ENCODE measurements at regions of chr15 and their contacts with region 1.

Region 1: DNA sequence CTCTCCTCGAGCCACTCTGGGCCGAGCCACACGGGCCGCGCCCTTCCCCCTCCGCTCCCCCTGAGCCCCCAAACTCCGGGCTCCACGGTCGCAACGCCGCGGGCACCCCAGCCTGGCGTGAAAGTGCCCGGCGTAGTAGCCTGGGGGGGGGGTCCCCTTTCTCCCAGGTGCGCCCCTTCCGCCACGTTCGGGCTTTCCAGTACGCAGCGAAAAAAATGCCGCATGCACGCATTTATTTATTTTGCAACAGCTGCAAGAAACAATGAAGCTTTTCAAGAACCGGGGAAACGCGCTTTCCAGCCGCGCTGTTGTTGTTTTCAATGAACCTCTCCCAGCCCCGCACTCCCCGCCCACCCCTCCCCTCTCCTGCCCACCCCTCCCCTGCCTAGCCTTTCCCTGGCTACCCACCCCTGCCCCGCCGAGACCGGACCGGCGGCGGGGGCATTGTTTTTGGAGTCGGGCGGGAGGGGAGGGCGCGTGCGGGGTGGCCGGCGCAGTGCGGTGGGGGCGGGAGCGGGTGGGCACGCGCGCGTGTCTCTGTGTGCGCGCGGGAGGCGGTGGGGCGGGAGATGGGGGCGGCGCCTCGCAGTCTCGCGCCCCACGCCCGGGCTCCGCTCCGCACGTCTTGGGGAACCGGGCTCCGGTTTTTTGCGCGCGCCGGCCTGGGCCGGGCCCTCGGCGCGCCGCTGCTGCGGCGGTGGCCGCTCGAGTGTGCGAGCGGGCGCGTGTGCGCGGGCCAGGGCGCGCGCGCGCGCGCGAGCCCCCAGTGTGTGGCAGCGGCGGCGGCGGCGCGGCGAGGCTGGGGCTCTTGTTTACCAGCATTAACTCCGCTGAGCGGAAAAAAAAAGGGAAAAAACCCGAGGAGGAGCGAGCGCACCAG is at the start of gene IGF1R:
- DNase-seq: peak; percentile 88 to 94 (median 91)
- ATAC-seq: peak; percentile 46 to 89 (median 76)
- H3K4me3 ChIP-seq: peak within 1 kb of the TSS; percentile 68 to 93 (median 86)
- H3K27ac ChIP-seq: peak within 1 kb of the TSS; percentile 90 to 97 (median 94)
- H3K4me1 ChIP-seq: peaks cover 0 to 36% (median 19%) of the 10 kb centered on the region in 12 donors
- H3K27me3 ChIP-seq: peaks cover 0 to 68% (median 17%) of the 10 kb centered on the region in 9 donors
- CTCF ChIP-seq: peak in 5 of 12 donors; percentile 2 to 44 (median 19)
- POLR2A ChIP-seq: peak; percentile 35 to 54
- total RNA-seq, gene IGF1R: 26.0 to 93.1 (median 47.5) TPM

Region 2: GRCh38 chr15:98518823-98519561 is 129.0 kb before region 1 on chr15:
- intact Hi-C with region 1: loop called in 5 of 10 experiments (anchors 2 to 10 kb)
- DNase-seq: peak in 3 of 5 donors; percentile 41 to 54 (median 50)
- ATAC-seq: peak in 3 of 4 donors; percentile 73 to 82 (median 82)
- H3K4me3 ChIP-seq: no peak overlapping the region
- H3K27ac ChIP-seq: no peak overlapping the region
- H3K4me1 ChIP-seq: peaks cover 0 to 8% (median under 1%) of the 10 kb centered on the region in 12 donors
- H3K27me3 ChIP-seq: peaks cover 0 to 8% (median 0%) of the 10 kb centered on the region in 9 donors
- CTCF ChIP-seq: peak; percentile 62 to 89 (median 82)
- POLR2A ChIP-seq: no peak

Region 3: DNA sequence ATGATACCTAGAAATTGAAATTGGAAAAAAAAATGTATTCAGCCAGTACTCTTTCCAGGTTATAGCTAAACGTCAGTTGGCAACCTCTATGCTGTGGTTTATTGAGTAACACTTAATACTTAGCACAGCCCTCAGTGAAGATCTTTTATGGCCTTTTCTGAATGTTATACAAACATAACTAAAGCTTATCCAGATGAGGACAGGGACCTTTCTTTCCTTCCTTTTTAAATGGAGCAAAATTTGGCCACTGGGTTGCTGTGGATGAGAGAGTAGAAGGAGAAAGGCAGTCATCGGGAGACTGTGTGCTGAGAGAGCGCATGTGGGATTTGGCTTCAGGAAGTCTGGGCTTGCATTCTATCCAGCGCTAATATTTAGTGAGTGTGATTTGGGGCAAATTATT is 36.4 kb after region 1 on chr15:
- intact Hi-C with region 1: no loop called
- DNase-seq: no peak
- ATAC-seq: peak in 3 of 4 donors; percentile 14 to 49 (median 44)
- H3K4me3 ChIP-seq: no peak overlapping the region
- H3K27ac ChIP-seq: peak overlapping the region in 6 of 12 donors; percentile 24 to 73 (median 55)
- H3K4me1 ChIP-seq: peaks cover 7 to 80% (median 46%) of the 10 kb centered on the region in 12 donors
- H3K27me3 ChIP-seq: no peaks in the 10 kb centered on the region
- CTCF ChIP-seq: no peak
- POLR2A ChIP-seq: no peak

Region 4: GRCh38 chr15:98719137-98719740 is 71.2 kb after region 1 on chr15:
- intact Hi-C with region 1: loop called in 2 of 10 experiments (anchors 2 to 5 kb)
- DNase-seq: no peak
- ATAC-seq: no peak
- H3K4me3 ChIP-seq: no peak overlapping the region
- H3K27ac ChIP-seq: peak overlapping the region in 10 of 12 donors; percentile 61 to 81 (median 69)
- H3K4me1 ChIP-seq: peaks cover 0 to 99% (median 57%) of the 10 kb centered on the region in 12 donors
- H3K27me3 ChIP-seq: no peaks in the 10 kb centered on the region
- CTCF ChIP-seq: no peak
- POLR2A ChIP-seq: no peak

Region 5: DNA sequence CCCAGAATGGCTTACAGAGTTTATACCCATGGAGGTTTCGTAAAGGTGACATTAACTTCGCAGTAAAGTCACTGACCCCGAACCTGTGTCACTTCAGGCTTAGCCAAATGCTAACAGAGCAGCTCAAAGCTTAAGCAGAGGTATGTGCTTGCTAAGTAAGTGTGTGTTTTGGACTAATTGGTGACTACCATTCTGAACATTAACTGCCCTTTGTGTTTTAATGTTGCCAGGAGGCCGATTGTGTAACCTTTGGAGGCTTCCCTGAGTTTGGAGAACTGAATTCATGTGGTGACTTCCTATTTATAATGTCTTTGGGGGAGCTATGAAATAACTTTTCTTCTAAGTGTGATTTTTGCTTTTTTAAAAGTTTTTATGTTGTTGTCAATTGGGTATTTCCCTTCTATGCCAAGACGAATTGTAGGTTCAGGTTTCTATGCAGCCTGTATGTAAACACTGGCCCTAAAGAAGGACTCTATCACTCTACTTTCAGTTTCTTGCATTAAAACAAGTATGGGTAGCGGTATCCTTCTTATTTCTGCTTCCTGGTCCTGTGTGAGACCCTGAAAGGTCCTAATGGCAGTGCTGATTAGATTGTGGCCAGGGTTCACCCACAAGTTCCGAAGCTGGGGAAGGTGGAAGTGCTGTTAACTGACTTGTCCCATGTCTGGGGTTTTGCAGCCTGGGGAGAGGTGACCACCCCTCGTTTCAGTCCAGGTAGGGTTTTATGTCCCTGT is 86.6 kb after region 1 on chr15:
- intact Hi-C with region 1: loop called in 4 of 10 experiments (anchors 5 to 10 kb)
- DNase-seq: no peak
- ATAC-seq: peak in 1 of 4 donors; percentile 12
- H3K4me3 ChIP-seq: no peak overlapping the region
- H3K27ac ChIP-seq: peak overlapping the region in 9 of 12 donors; percentile 6 to 73 (median 38)
- H3K4me1 ChIP-seq: peaks cover 0 to 93% (median 54%) of the 10 kb centered on the region in 12 donors
- H3K27me3 ChIP-seq: no peaks in the 10 kb centered on the region
- CTCF ChIP-seq: no peak
- POLR2A ChIP-seq: no peak

Region 6: GRCh38 chr15:98850961-98851573 is 203.1 kb after region 1 on chr15:
- intact Hi-C with region 1: loop called in 4 of 10 experiments (anchors 1 kb)
- DNase-seq: peak; percentile 73 to 83 (median 83)
- ATAC-seq: peak; percentile 60 to 82 (median 71)
- H3K4me3 ChIP-seq: peak overlapping the region in 5 of 12 donors; percentile 62 to 84 (median 70)
- H3K27ac ChIP-seq: peak overlapping the region in 11 of 12 donors; percentile 62 to 93 (median 87)
- H3K4me1 ChIP-seq: peaks cover 17 to 67% (median 44%) of the 10 kb centered on the region in 12 donors
- H3K27me3 ChIP-seq: no peaks in the 10 kb centered on the region
- CTCF ChIP-seq: peak; percentile 63 to 89 (median 73)
- POLR2A ChIP-seq: no peak

Region 7: GRCh38 chr15:99068186-99068585 is 420.2 kb after region 1 on chr15:
- intact Hi-C with region 1: loop called in 4 of 10 experiments (anchors 5 to 10 kb)
- DNase-seq: peak in 1 of 5 donors; percentile 12
- ATAC-seq: no peak
- H3K4me3 ChIP-seq: no peak overlapping the region
- H3K27ac ChIP-seq: no peak overlapping the region
- H3K4me1 ChIP-seq: peaks cover 0 to 6% (median 0%) of the 10 kb centered on the region in 12 donors
- H3K27me3 ChIP-seq: no peaks in the 10 kb centered on the region
- CTCF ChIP-seq: no peak
- POLR2A ChIP-seq: no peak

Measured in heart left ventricle (tissue), 16 donors.